Activated B cell treated with CpG ODN at 0.5 μM for 24 hours (primary cell): ENCODE measurements at regions of chr9 and their contacts with region 1.

Region 1: DNA sequence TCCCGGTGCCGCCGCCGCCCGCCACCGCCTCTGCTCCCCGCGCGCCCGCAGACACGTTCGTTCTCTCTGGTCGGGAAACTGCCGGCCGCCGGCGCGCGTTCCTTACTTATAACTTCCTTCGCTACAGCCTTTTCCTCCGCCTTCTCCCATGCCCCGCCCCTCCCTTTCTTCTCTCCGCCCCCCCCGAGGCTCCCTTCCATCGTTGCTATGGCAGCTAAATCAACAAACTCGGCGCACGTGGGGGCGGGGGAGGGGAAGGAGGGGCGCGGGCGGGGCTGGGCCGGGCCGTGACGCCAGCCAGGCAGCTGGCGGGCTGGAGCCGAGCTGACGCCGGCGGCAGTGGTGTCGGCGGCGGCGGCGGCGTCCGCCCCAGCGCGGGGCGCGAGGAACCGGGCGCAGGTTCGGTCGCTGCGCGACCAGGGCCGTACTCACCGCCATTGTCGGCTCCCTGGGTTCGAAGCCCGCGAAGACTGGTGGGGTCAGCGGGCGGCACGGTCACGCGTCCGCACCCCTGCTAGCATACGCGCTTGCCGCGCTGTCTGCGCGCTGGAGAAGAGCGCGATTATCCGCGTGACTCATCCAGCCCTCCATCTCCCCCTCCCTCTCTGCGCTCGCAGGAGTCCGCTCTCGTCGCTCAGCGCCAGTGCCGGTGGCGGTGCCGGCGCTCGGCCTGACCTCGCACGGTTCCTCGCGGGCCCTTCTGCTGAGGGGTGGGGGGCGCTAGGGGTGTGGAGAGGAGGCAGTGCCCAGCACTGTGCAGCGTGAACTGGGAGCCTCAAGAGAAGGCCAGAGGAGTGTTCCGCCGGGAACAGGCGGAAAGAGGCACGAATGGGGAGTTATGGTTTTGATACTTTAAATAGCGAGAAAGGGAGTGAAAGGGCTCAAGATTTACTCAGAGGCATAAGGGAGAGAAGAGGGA is at the start of gene KLF4:
- DNase-seq: peak; percentile 68
- ATAC-seq: peak; percentile 73
- H3K4me3 Mint-ChIP-seq: peak within 1 kb of the TSS; percentile 78
- H3K27ac Mint-ChIP-seq: no peak within 1 kb of the TSS
- H3K4me1 Mint-ChIP-seq: peaks cover 28% of the 10 kb centered on the region
- H3K27me3 Mint-ChIP-seq: peaks cover 46% of the 10 kb centered on the region
- CTCF ChIP-seq: no peak
- total RNA-seq, gene KLF4: 1.0 TPM in 2 replicates

Region 2: GRCh38 chr9:107260437-107261086 is 229.4 kb before region 1 on chr9:
- CTCF ChIA-PET with region 1: no interaction called
- POLR2A ChIA-PET with region 1: no interaction called
- intact Hi-C with region 1: loop called (anchors 5 kb)
- DNase-seq: peak; percentile 17
- ATAC-seq: peak; percentile 98
- H3K4me3 Mint-ChIP-seq: peak overlapping the region; percentile 53
- H3K27ac Mint-ChIP-seq: peak overlapping the region; percentile 67
- H3K4me1 Mint-ChIP-seq: peaks cover 26% of the 10 kb centered on the region
- H3K27me3 Mint-ChIP-seq: peaks cover 3% of the 10 kb centered on the region
- CTCF ChIP-seq: no peak

Region 3: DNA sequence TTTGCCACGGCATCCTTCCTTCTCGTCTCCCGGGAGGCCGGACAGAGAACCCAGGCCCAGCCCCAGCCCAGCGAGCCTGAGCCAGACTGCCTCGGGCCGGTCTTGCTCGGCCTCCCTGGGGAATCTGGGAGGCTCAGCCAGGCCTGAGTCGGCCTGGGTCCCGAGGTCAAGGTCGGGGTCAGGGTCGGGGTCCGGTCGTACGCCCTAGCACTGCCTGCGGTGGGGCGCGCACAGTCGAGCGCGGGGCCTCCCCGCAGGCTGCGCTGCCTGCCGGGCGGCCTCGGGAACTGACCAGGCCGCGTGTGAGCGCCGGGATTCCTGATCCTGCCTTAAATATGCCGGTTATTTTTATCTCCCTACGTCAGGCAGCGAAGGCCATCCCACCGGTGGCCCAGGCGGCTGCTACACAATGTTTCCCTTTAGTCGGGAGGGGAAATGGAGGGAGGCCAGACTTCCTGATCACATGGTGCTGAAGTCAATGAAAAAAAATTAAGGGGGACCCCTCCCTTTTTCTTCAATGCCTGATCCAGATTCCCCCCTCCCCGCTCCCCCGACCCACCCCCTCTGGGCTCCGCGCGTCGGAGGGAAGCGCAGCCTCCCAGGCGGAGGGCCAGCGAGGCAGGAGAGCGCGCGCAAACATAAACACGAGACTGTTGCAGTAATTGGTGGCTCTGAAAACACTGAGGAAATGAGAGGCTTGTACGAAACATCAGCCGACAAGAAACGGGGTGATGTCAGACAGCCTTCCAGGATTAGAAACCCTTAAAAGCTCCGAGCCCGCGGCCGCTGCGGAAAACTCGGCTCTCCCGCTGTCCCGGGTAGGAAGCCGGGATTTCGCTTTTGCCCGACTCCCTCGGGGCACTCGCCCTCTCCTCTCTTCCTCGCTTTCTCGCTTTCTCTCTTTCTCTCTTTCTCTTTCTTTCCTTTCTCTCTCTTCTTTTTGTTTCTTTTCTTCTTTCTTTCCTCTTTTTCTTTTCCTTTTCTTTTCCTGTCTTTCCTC is 147.8 kb after region 1 on chr9:
- CTCF ChIA-PET with region 1: no interaction called
- POLR2A ChIA-PET with region 1: no interaction called
- intact Hi-C with region 1: loop called (anchors 5 kb)
- DNase-seq: peak; percentile 15
- ATAC-seq: peak; percentile 21
- H3K4me3 Mint-ChIP-seq: peak overlapping the region; percentile 81
- H3K27ac Mint-ChIP-seq: no peak overlapping the region
- H3K4me1 Mint-ChIP-seq: peaks cover 36% of the 10 kb centered on the region
- H3K27me3 Mint-ChIP-seq: peaks cover 17% of the 10 kb centered on the region
- CTCF ChIP-seq: no peak

Region 4: DNA sequence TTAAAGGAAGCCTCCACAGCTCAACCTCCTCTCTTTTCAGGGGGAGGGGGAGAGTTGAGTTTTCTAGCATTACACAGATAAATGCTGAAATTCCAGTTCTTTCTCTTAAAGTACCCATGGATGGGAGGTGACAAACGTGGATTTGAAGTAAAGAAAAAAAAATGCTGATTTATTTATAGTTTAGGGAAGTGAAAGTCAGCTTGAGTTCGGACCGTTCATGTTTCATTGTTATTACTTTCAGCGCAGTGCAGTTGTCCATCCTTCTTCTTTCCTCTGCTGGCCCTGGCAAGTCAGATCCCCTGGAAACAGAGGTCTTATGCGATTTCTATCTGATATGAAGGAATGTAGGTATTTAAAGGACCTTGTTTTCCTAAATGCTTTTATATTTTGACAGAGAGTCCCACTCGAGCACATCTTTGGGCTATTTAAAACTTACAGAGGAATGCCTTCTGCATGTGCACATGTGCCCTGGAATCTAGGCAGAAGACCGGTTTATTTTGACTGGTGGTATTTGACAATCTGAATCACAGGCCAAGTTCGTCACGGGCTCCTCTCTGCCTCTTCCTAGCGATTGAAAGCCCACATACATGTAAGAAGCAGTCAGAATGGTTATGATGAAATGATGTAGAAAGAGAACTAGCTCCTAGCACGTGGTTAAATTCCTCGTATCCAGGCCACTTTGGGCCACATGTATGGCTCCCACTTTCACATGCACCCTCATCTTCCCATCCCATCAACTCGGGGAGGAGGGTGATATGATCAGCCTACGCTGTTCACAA is 384.8 kb after region 1 on chr9:
- CTCF ChIA-PET with region 1: no interaction called
- POLR2A ChIA-PET with region 1: no interaction called
- intact Hi-C with region 1: loop called (anchors 2 kb)
- DNase-seq: no peak
- ATAC-seq: peak; percentile 65
- H3K4me3 Mint-ChIP-seq: peak overlapping the region; percentile 59
- H3K27ac Mint-ChIP-seq: peak overlapping the region; percentile 56
- H3K4me1 Mint-ChIP-seq: peaks cover 81% of the 10 kb centered on the region
- H3K27me3 Mint-ChIP-seq: no peaks in the 10 kb centered on the region
- CTCF ChIP-seq: no peak